Activated CD4-positive, alpha-beta T cell treated with anti-CD3 and anti-CD28 coated beads for 36 hours (primary cell): ENCODE measurements at regions of chr2 and their contacts with region 1.

Region 1: GRCh38 chr2:74690571-74690970 is 36.5 kb downstream of the SEMA4F start:
- DNase-seq: peak; percentile 27
- ATAC-seq: peak; percentile 77
- H3K4me3 Mint-ChIP-seq: no peak overlapping the region
- H3K27ac Mint-ChIP-seq: no peak overlapping the region
- H3K4me1 Mint-ChIP-seq: no peaks in the 10 kb centered on the region
- H3K27me3 Mint-ChIP-seq: no peaks in the 10 kb centered on the region

Region 2: DNA sequence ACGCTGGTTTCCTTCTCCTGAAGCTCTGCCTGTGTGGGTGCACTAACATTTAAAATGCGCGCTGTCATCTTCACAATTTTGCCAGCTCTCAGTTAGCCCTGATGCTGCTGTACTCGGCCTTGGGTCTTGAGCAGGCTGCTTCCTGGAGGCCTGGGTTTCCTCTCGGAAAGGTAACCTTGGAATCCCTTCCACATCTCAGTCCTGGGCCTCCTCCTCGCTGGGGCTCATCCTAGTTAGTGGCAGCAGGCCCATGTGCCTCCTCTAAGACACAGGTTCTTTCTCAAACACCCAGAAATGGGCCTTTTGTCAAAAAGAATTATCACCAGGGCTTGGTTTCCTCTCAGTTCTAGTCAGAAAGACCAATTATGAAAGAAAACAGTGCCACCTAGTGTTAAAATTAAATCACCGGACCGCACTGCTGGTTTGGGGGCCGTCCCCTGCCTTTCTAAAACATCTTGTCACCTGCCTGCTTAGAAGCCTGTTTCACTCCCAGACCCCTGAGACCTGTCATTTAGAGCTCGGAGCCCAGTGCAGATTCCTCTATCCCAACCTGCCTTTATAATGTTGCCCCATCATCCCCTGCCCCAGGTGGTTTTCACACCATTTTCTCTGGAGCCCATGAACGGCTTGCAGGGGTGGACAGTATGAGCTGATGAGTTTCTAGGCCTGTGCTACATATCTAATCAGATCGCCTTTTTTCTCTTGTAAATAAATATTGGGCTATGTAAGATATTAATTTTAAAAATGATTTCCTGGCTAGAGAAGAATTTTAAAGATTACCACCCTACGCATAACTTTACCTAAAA is 185.7 kb after region 1 on chr2:
- CTCF ChIA-PET with region 1: interaction called, 15 read pairs
- POLR2A ChIA-PET with region 1: no interaction called
- intact Hi-C with region 1: loop called (anchors 1 kb)
- DNase-seq: peak; percentile 54
- ATAC-seq: peak; percentile 91
- H3K4me3 Mint-ChIP-seq: no peak overlapping the region
- H3K27ac Mint-ChIP-seq: peak overlapping the region; percentile 21
- H3K4me1 Mint-ChIP-seq: no peaks in the 10 kb centered on the region
- H3K27me3 Mint-ChIP-seq: no peaks in the 10 kb centered on the region

Region 3: DNA sequence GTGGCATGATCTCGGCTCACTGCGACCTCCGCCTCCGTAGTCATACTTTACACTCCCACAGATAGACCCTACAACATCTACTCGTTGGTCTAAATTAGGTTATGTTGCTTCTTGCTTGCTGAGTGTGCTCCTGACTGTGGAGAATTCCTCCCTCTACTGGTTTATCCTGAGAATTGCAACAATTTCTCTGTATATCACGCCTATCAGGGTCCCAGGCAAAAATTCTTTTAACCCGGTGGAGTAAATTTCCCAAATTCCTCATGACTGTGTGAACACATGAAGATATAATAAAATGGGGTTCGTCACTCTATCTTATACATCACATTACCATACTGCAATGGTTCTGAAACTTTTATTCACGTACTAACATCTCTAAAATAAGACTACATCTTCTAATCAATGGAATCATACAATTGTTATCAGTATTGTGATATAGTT is 713.4 kb after region 1 on chr2:
- CTCF ChIA-PET with region 1: no interaction called
- POLR2A ChIA-PET with region 1: no interaction called
- intact Hi-C with region 1: loop called in 1 of 2 experiments (anchors 5 kb)
- DNase-seq: no peak
- ATAC-seq: peak; percentile 63
- H3K4me3 Mint-ChIP-seq: no peak overlapping the region
- H3K27ac Mint-ChIP-seq: no peak overlapping the region
- H3K4me1 Mint-ChIP-seq: no peaks in the 10 kb centered on the region
- H3K27me3 Mint-ChIP-seq: peaks cover 8% of the 10 kb centered on the region

Region 4: DNA sequence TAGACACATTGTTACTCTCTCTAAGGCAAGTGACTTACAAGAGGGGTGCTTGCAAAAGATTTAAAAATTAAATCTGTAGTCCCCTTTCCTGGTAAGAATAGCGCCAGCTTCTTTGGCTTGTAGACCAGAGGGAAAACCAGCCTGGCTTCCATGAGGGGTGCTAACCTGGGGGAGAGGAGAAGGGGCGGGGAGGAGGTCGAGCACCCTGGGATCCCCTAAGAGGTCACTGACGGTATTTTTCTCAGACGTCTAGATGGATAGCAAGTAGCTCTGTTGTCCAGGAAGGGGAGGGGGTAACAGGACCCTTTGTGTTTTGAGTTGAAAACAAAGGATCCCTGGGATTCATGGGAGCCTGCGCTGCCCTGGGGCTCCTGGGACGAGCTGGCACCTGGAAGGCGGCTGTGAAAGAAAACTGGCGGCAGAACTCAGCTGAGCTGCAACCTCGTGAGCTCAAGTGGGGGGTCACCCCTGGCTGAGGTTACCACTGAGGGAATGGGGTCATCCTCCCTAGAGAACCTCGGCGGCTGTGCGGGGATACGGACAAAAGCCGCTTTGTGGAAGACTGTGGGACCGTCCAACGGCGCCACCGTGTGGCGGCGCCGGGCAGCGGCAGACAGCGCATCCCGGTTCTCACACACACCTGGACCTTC is 918.2 kb after region 1 on chr2:
- CTCF ChIA-PET with region 1: no interaction called
- POLR2A ChIA-PET with region 1: no interaction called
- intact Hi-C with region 1: loop called in 1 of 2 experiments (anchors 1 kb)
- DNase-seq: peak; percentile 72
- ATAC-seq: peak; percentile 81
- H3K4me3 Mint-ChIP-seq: no peak overlapping the region
- H3K27ac Mint-ChIP-seq: no peak overlapping the region
- H3K4me1 Mint-ChIP-seq: peaks cover 6% of the 10 kb centered on the region
- H3K27me3 Mint-ChIP-seq: peaks cover 55% of the 10 kb centered on the region